ENCODE measurements at regions of chrX and their contacts with region 1.

Region 1: DNA sequence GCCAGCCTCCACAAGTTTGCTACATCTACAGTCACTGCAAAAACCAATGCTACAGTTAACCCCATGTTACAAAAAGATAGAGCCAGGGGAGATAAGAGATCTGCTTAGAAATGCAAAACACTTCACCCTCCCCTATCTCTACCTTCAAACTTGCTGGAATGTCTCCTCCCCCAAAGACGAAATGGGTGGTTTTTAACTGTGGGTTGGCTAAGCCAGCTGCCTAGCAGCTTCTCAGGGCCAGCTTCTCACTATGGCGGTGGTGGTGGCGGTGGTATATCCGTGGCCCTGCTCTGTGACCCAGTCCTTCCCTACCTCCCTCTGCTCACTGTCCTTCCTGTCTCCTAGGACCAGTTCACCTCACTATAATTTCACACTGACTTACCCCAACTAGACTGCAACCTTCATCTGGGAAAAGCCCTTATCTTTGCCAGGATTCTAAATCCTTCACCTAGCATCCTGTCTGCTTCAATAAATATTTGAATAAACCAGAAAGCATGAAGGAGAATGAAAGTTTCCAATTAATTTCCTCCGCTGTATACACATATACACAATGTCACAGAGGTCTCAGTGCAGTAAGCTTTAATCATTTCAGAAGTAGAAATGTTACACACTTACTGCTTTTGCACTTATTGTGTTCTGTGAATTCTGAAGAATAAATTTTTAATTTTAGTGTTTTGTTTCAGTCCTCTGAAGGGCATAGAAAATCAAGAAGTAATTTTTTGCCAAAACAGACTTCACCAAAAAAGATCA is 46.3 kb downstream of the SH3KBP1 start:
- DNase-seq: peak; percentile 55
- H3K4me3 ChIP-seq: peak overlapping the region; percentile 46
- H3K27ac ChIP-seq: peak overlapping the region; percentile 81
- H3K4me1 ChIP-seq: peaks cover 51% of the 10 kb centered on the region
- CTCF ChIP-seq: no peak

Region 2: DNA sequence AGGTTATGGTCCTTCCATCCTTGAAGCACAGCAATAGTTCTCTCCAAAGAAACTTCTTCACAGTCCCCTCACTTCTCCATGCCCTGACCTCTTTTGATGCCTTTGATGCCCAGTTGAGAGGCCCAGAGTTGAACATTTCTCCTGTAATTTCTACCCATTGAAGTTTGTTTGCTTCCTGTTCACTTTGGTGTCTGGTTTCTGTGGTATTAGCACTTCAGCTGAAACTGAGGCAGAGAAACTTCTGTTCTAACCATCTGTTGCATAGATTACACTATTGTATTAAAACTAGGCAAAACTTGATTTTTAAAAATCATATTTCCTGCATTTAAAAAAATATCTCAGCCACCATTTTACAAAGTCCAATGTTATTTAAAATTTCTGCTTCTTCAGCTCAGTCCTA is 629.0 kb before region 1 on chrX:
- CTCF ChIA-PET with region 1: no interaction called
- POLR2A ChIA-PET with region 1: no interaction called
- intact Hi-C with region 1: no loop called
- DNase-seq: no peak
- H3K4me3 ChIP-seq: no peak overlapping the region
- H3K27ac ChIP-seq: no peak overlapping the region
- H3K4me1 ChIP-seq: no peaks in the 10 kb centered on the region
- CTCF ChIP-seq: no peak

Region 3: DNA sequence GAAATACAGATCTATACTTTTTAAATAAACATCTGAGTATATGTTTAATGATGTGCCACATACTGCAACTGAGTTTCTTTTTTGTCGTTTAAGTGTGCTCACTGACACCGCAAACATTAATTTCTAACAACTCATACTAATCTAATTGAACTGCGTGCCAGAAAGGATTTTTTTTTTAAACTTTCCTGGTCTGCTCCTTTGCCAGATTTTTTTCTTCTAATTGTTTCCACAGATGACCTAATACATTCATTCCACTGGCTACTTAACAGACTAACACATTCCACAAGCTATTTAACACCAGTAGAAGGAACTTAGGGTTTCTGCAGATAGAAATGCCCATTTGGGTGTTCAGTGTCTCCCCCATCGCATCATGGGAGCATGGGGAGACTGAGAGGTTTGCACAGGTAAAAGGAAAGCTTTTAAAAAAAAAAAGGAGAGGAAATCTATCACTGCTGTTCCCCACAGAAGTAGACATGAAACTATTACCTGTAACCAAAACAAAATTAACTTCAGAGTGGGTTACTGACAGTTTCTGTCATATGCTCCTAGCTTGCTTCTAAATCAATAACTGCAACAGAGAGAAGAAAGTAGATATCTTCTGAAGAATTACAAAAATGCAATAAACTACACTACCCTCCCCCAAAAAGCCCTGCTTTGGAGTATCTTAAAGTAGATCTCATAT is 14.8 kb after region 1 on chrX:
- CTCF ChIA-PET with region 1: no interaction called
- POLR2A ChIA-PET with region 1: interaction called, 12 read pairs
- intact Hi-C with region 1: no loop called
- DNase-seq: no peak
- H3K4me3 ChIP-seq: no peak overlapping the region
- H3K27ac ChIP-seq: peak overlapping the region; percentile 53
- H3K4me1 ChIP-seq: peaks cover 58% of the 10 kb centered on the region
- CTCF ChIP-seq: no peak

Measured in OCI-LY7 (cell line).